ENCODE measurements at regions of chr4 and their contacts with region 1.

Region 1: GRCh38 chr4:142846729-142847596 is 862 bp upstream of the INPP4B start:
- DNase-seq: peak; percentile 63 to 87 (median 70)
- ATAC-seq: peak; percentile 87
- H3K4me3 ChIP-seq: peak overlapping the region; percentile 67
- H3K4me3 Mint-ChIP-seq: peak overlapping the region; percentile 89
- H3K27ac ChIP-seq: no peak overlapping the region
- H3K27ac Mint-ChIP-seq: peak overlapping the region; percentile 47
- H3K4me1 ChIP-seq: peaks cover 24% of the 10 kb centered on the region
- H3K4me1 Mint-ChIP-seq: peaks cover 14% of the 10 kb centered on the region
- H3K27me3 ChIP-seq: peaks cover 4 to 12% of the 10 kb centered on the region in 2 experiments
- H3K27me3 Mint-ChIP-seq: peaks cover 22% of the 10 kb centered on the region
- CTCF ChIP-seq: peak; percentile 70

Region 2: DNA sequence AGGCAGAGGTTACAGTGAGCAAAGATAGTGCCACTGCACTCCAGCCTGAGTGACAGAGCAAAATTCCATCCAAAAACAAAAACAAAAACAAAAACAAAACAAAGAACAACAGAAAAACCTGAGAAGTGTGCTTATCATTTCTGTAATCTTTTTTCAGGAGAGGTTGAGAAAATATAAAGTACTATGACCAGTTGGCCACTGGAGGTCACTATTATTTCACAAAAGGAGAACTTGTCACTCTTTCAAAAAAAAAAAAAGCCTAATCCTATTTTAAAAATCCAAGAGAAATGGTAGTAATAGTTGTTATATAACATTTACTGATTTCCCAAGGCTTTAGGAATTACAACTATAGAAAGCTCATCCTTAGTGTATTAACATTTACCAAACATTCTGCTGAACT is 1688.7 kb before region 1 on chr4:
- CTCF ChIA-PET with region 1: no interaction called
- POLR2A ChIA-PET with region 1: no interaction called
- intact Hi-C with region 1: loop called (anchors 2 to 5 kb)
- DNase-seq: peak in 3 of 14 experiments; percentile 11 to 23 (median 13)
- ATAC-seq: no peak
- H3K4me3 ChIP-seq: no peak overlapping the region
- H3K4me3 Mint-ChIP-seq: no peak overlapping the region
- H3K27ac ChIP-seq: no peak overlapping the region
- H3K27ac Mint-ChIP-seq: no peak overlapping the region
- H3K4me1 ChIP-seq: no peaks in the 10 kb centered on the region
- H3K4me1 Mint-ChIP-seq: no peaks in the 10 kb centered on the region
- H3K27me3 ChIP-seq: peaks cover 0 to 9% of the 10 kb centered on the region in 2 experiments
- H3K27me3 Mint-ChIP-seq: peaks cover 14% of the 10 kb centered on the region
- CTCF ChIP-seq: peak; percentile 28

Region 3: GRCh38 chr4:141860974-141861373 is 986.0 kb before region 1 on chr4:
- CTCF ChIA-PET with region 1: no interaction called
- POLR2A ChIA-PET with region 1: no interaction called
- intact Hi-C with region 1: loop called (anchors 5 kb)
- DNase-seq: peak in 3 of 14 experiments; percentile 2 to 13 (median 5)
- ATAC-seq: no peak
- H3K4me3 ChIP-seq: no peak overlapping the region
- H3K4me3 Mint-ChIP-seq: no peak overlapping the region
- H3K27ac ChIP-seq: no peak overlapping the region
- H3K27ac Mint-ChIP-seq: no peak overlapping the region
- H3K4me1 ChIP-seq: no peaks in the 10 kb centered on the region
- H3K4me1 Mint-ChIP-seq: no peaks in the 10 kb centered on the region
- H3K27me3 ChIP-seq: no peaks in the 10 kb centered on the region
- H3K27me3 Mint-ChIP-seq: peaks cover 5% of the 10 kb centered on the region
- CTCF ChIP-seq: no peak

Region 4: GRCh38 chr4:142282870-142283431 is 564.0 kb before region 1 on chr4:
- CTCF ChIA-PET with region 1: interaction called, 4 read pairs
- POLR2A ChIA-PET with region 1: no interaction called
- intact Hi-C with region 1: loop called (anchors 5 kb)
- DNase-seq: peak in 6 of 14 experiments; percentile 11 to 69 (median 46)
- ATAC-seq: peak; percentile 47
- H3K4me3 ChIP-seq: no peak overlapping the region
- H3K4me3 Mint-ChIP-seq: no peak overlapping the region
- H3K27ac ChIP-seq: no peak overlapping the region
- H3K27ac Mint-ChIP-seq: no peak overlapping the region
- H3K4me1 ChIP-seq: peaks cover 20% of the 10 kb centered on the region
- H3K4me1 Mint-ChIP-seq: peaks cover 28% of the 10 kb centered on the region
- H3K27me3 ChIP-seq: no peaks in the 10 kb centered on the region
- H3K27me3 Mint-ChIP-seq: no peaks in the 10 kb centered on the region
- CTCF ChIP-seq: peak; percentile 82

Region 5: DNA sequence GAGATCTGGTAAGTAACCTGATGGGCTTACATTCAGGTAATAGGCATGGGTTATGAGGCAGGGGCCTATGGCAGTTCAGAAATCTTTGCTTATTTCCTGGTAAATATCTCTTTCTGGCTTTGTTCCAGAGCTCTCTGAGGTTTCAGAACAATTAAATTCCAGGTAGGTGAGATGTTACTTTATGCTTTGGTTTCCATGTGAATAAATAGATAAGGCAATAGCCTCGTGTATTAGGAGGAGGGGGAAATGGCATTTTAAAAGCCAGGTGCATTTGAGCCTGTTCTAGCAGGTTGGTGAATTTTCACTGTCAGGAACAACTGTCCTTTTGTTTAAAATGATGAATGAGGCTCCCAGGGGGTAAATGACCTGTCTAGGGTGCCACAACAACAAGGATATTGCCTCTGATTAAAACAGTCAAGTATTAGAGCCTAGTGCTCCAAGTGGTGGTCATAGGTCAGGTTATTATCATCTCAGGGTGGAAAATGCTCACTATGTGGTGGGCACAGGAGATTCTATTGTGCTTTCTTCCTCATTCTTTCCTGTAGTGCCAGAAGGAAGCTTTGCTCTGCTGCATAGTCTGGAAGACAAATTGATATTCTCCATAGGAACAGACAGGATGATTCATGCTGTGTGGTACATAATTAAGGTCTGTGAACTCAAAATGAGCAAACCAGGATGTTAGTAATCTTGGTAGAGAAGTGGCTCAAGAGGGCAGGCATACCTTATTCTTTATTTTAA is 297.1 kb before region 1 on chr4:
- CTCF ChIA-PET with region 1: no interaction called
- POLR2A ChIA-PET with region 1: no interaction called
- intact Hi-C with region 1: loop called in 1 of 2 experiments (anchors 10 kb)
- DNase-seq: peak in 1 of 14 experiments; percentile 31
- ATAC-seq: peak; percentile 58
- H3K4me3 ChIP-seq: no peak overlapping the region
- H3K4me3 Mint-ChIP-seq: no peak overlapping the region
- H3K27ac ChIP-seq: no peak overlapping the region
- H3K27ac Mint-ChIP-seq: peak overlapping the region; percentile 28
- H3K4me1 ChIP-seq: peaks cover 14% of the 10 kb centered on the region
- H3K4me1 Mint-ChIP-seq: peaks cover 61% of the 10 kb centered on the region
- H3K27me3 ChIP-seq: no peaks in the 10 kb centered on the region
- H3K27me3 Mint-ChIP-seq: no peaks in the 10 kb centered on the region
- CTCF ChIP-seq: no peak

Region 6: DNA sequence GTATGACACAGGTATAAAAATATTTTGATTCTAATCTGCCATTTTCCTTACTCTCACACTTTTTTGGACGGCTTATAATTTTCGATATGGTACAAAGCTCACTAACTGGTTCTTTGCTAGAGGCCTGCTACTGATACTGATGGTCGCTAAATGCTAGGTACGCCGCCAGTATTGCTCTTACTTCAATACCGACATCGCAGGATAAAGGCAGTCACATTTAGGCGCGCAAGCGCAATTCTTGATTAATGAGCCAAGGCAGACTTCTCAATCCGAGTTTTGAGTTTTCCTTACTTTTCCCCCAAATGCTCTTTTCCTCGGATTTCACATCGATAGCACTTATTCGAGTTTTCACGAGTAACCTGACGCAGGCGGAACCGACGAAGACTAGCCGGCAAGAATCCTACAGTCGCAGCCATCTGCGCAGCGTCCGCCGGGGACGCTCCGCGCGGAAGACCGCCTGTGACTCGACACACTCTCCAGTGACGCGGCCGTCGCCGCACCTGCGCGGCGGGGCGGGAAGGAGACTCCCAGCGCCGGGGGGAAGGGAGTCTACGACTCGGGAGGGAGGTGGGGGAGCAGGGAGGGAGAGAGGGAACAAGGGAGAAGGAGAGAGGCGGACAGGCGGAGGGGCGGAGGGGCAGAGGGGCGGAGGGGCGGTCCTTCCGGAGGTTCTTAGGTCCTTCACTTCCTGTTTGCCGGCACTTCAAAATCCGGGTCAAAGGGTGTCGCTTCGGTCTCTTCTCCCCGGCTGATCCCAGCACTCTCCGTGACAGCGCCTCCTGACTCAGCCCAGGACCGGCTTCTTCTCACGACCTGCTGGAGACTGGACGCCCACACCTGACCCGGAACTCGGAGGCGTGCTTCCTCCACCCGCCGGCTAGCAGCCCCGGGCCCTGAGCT is 337.5 kb after region 1 on chr4 and contains the start of gene USP38:
- CTCF ChIA-PET with region 1: no interaction called
- POLR2A ChIA-PET with region 1: no interaction called
- intact Hi-C with region 1: loop called in 1 of 2 experiments (anchors 10 kb)
- DNase-seq: peak; percentile 73 to 96 (median 80)
- ATAC-seq: peak; percentile 84
- H3K4me3 ChIP-seq: peak within 1 kb of the TSS; percentile 70
- H3K4me3 Mint-ChIP-seq: peak within 1 kb of the TSS; percentile 91
- H3K27ac ChIP-seq: peak within 1 kb of the TSS; percentile 93 to 97
- H3K27ac Mint-ChIP-seq: peak within 1 kb of the TSS; percentile 97
- H3K4me1 ChIP-seq: peaks cover 7% of the 10 kb centered on the region
- H3K4me1 Mint-ChIP-seq: peaks cover 75% of the 10 kb centered on the region
- H3K27me3 ChIP-seq: no peaks in the 10 kb centered on the region
- H3K27me3 Mint-ChIP-seq: no peaks in the 10 kb centered on the region
- CTCF ChIP-seq: no peak
- total RNA-seq, gene USP38: 34.2 to 35.7 TPM

Region 7: DNA sequence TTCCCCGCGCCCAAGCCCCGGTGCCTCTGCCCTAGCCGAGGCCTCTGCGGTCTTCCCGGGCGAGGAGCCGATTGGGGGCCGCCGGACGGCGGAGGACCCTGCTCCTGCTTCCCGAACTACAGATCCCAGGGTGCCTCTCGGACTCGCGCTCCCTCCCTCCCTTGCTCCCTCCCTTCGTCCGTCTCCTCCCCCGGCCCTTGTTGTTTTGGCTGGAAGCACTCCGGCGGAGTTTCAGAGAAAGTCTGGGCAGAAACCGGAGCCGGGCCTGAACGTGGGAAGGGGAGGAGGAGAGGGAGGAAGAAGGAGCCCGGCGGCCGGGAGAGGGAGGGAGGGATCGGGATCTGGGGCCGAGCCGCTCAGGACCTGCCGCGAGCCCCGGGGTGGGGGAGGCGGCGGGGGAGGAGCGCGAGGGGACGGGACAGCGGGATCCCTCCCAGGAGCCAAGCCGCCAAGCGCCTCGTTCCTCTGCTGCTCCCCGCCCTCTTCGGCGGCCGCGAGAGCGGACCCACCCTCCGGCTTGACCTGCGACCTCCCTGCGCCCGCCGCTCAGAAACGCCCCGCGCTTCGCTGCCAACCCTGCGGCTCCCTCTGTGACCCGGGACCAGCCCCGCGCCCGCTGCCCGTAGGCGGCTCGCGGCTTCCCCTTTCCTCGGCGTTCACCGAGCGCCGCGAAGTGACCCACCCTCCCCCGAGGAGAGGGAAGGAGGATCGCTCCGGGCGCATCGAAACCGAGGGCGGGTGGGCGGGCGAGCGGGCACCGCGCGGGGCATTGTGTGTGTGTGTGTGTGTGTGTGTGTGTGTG is 489.2 kb after region 1 on chr4:
- CTCF ChIA-PET with region 1: no interaction called
- POLR2A ChIA-PET with region 1: no interaction called
- intact Hi-C with region 1: no loop called
- DNase-seq: peak in 4 of 14 experiments; percentile 9 to 52 (median 34)
- ATAC-seq: no peak
- H3K4me3 ChIP-seq: peak overlapping the region; percentile 52
- H3K4me3 Mint-ChIP-seq: peak overlapping the region; percentile 62
- H3K27ac ChIP-seq: no peak overlapping the region
- H3K27ac Mint-ChIP-seq: no peak overlapping the region
- H3K4me1 ChIP-seq: peaks cover 20% of the 10 kb centered on the region
- H3K4me1 Mint-ChIP-seq: peaks cover 6% of the 10 kb centered on the region
- H3K27me3 ChIP-seq: peaks cover 33 to 51% of the 10 kb centered on the region in 2 experiments
- H3K27me3 Mint-ChIP-seq: peaks cover 64% of the 10 kb centered on the region
- CTCF ChIP-seq: no peak

Region 8: DNA sequence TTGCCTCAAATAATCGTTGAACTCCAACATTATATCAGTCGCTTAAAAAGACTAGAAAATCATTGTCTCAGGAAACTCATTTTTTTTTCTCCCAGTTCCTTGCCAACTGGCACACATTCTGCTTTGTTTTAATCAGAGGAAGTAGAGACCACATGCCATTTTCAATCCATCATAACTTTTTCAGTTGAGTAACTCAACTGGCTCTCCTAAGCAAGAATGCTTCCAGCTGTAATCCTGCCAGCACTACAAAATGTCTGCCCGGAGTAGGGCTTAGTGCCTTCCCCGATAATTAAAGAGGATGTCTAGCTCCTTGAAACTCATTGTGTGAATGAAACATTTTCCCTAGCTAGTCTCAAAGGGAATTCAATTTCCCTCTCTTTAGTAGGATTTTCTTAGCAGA is 820.5 kb after region 1 on chr4:
- CTCF ChIA-PET with region 1: no interaction called
- POLR2A ChIA-PET with region 1: no interaction called
- intact Hi-C with region 1: no loop called
- DNase-seq: no peak
- ATAC-seq: no peak
- H3K4me3 ChIP-seq: no peak overlapping the region
- H3K4me3 Mint-ChIP-seq: no peak overlapping the region
- H3K27ac ChIP-seq: no peak overlapping the region
- H3K27ac Mint-ChIP-seq: no peak overlapping the region
- H3K4me1 ChIP-seq: no peaks in the 10 kb centered on the region
- H3K4me1 Mint-ChIP-seq: no peaks in the 10 kb centered on the region
- H3K27me3 ChIP-seq: no peaks in the 10 kb centered on the region
- H3K27me3 Mint-ChIP-seq: no peaks in the 10 kb centered on the region
- CTCF ChIP-seq: no peak

Measured in CD4-positive, alpha-beta T cell (primary cell).